ENCODE measurements at regions of chr9 and their contacts with region 1.

Region 1: GRCh38 chr9:127423934-127424675 is at the start of gene ZNF79:
- DNase-seq: peak; percentile 92 to 97
- ATAC-seq: peak; percentile 99 to 100
- H3K4me3 ChIP-seq: peak within 1 kb of the TSS; percentile 86
- H3K27ac ChIP-seq: peak within 1 kb of the TSS; percentile 77 to 93
- H3K4me1 ChIP-seq: peaks cover 10% of the 10 kb centered on the region; the same call in 2 of the 3 replicates
- CTCF ChIP-seq: no peak
- EP300 ChIP-seq: no peak
- POLR2A ChIP-seq: peak; percentile 74
- RAD21 ChIP-seq: no peak
- polyA plus RNA-seq, gene ZNF79: 5.7 and 7.4 TPM in 2 replicates

Region 2: DNA sequence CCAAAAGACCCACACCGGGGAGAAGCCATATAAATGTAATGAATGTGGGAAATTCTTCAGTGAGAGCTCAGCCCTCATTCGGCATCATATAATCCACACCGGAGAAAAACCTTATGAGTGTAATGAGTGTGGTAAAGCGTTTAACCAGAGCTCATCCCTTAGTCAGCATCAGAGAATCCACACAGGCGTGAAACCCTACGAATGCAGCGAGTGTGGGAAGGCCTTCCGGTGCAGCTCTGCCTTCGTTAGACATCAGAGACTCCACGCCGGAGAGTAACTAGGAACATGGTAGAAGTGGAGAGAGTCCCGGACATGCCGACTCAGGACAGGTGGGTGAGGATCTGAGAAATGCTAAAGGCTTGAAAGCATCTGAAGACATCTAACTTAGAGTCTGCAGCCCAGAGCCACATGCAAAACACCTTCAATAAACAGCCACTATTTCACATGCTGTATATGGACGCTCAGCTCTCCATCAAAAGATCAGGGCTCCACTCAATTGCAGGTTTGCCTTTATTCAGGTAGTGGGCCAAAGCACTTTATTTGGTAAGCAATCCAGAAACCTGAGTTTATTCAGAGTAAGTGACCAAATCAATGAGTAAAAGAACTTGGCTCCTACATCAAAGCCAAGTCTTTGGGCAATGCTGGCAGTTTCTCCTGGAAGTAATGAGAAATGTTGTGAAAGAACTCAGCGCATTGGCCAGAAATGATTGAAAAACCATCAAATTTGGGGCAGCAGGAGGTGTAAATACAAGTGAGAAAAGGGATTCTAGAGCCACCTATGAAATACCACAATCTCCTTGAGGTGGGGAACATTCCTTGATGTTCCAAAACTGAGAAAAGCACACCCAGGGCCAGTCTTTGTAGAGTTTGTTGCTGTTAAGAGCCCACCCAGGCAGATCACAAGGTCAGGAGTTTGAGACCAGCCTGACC is 21.1 kb after region 1 on chr9:
- CTCF ChIA-PET with region 1: interaction called, 3 read pairs
- POLR2A ChIA-PET with region 1: interaction called, 23 read pairs
- DNase-seq: peak in 1 of 2 experiments; percentile 55
- ATAC-seq: peak; percentile 31 to 36
- H3K4me3 ChIP-seq: no peak overlapping the region
- H3K27ac ChIP-seq: no peak overlapping the region
- H3K4me1 ChIP-seq: peaks cover 7% of the 10 kb centered on the region; the same call in 2 of the 3 replicates
- CTCF ChIP-seq: no peak
- EP300 ChIP-seq: no peak
- POLR2A ChIP-seq: no peak
- RAD21 ChIP-seq: no peak